ENCODE measurements at regions of chr9 and their contacts with region 1.

Region 1: DNA sequence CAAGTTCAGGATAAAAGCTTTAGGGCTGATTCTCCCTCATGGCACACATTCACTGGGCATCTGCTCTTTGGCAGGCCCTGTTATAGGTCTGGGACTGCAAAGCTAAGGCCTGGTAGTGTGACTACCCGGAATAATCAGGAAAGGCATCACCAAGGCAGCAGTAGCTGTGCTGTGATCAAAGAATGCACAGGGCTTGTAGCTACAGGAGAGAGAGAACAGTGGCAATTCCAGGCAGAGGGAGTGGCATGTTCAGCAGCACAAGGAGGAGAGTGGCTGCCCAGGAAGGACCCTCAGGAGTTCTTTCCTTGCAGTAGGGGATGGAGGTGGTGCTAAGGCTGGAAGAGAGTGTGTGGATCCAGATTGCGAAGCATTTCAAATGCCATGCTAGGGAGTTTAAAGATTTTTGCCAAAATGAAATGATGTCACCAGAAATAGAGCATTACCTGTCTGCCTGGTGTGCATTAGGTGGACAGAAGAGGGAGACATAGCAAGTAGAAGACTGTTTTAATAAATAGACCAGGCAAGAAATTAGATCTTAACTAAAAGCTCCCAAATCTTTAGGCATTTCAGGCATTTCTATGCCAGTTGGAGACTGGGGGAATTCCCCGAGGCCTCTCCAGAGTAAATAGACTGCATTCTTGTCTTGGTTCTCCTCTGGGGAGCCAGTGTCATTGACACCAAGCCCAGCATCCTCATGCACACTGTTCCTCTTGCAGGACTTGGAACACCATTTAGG is 69.1 kb downstream of the GPR21 start:
- DNase-seq: peak; percentile 12
- H3K4me3 ChIP-seq: no peak overlapping the region
- H3K27ac ChIP-seq: no peak overlapping the region
- H3K27me3 ChIP-seq: no peaks in the 10 kb centered on the region
- CTCF ChIP-seq: peak; percentile 43

Region 2: GRCh38 chr9:123349691-123350480 is 247.3 kb after region 1 on chr9:
- in situ Hi-C with region 1: loop called (anchors 25 kb)
- DNase-seq: peak; percentile 45
- H3K4me3 ChIP-seq: no peak overlapping the region
- H3K27ac ChIP-seq: no peak overlapping the region
- H3K27me3 ChIP-seq: peaks cover 14% of the 10 kb centered on the region
- CTCF ChIP-seq: peak; percentile 95